Transverse colon (tissue), 4 donors: ENCODE measurements at regions of chr2 and their contacts with region 1.

Region 1: GRCh38 chr2:229273723-229274338 is 2.7 kb upstream of the PID1 start:
- DNase-seq: peak; percentile 86
- H3K4me3 ChIP-seq: peak overlapping the region in 2 of 4 donors; percentile 13 to 28
- H3K27ac ChIP-seq: peak overlapping the region; percentile 68 to 81 (median 74)
- H3K4me1 ChIP-seq: peaks cover 3 to 49% (median 13%) of the 10 kb centered on the region in 4 donors
- H3K27me3 ChIP-seq: no peaks in the 10 kb centered on the region
- CTCF ChIP-seq: peak; percentile 64 to 87 (median 78)
- EP300 ChIP-seq: no peak
- POLR2A ChIP-seq: no peak

Region 2: GRCh38 chr2:229133155-229133772 is 140.6 kb before region 1 on chr2:
- in situ Hi-C with region 1: loop called in 2 of 4 experiments (anchors 10 kb)
- intact Hi-C with region 1: no loop called
- DNase-seq: peak; percentile 26
- H3K4me3 ChIP-seq: no peak overlapping the region
- H3K27ac ChIP-seq: no peak overlapping the region
- H3K4me1 ChIP-seq: peaks cover 8 to 39% (median 19%) of the 10 kb centered on the region in 4 donors
- H3K27me3 ChIP-seq: no peaks in the 10 kb centered on the region
- CTCF ChIP-seq: peak; percentile 41 to 70 (median 52)
- EP300 ChIP-seq: no peak
- POLR2A ChIP-seq: no peak

Region 3: GRCh38 chr2:229226382-229226781 is 47.4 kb before region 1 on chr2:
- in situ Hi-C with region 1: no loop called
- intact Hi-C with region 1: no loop called
- DNase-seq: no peak
- H3K4me3 ChIP-seq: no peak overlapping the region
- H3K27ac ChIP-seq: no peak overlapping the region
- H3K4me1 ChIP-seq: no peaks in the 10 kb centered on the region
- H3K27me3 ChIP-seq: no peaks in the 10 kb centered on the region
- CTCF ChIP-seq: no peak
- EP300 ChIP-seq: no peak
- POLR2A ChIP-seq: no peak